AG04450 (cell line): ENCODE measurements at regions of chr11 and their contacts with region 1.

Region 1: GRCh38 chr11:45872513-45873356 is 12.7 kb upstream of the MAPK8IP1 start:
- DNase-seq: peak; percentile 61
- H3K4me3 ChIP-seq: no peak overlapping the region
- H3K27ac ChIP-seq: peak overlapping the region; percentile 78
- H3K27me3 ChIP-seq: no peaks in the 10 kb centered on the region
- CTCF ChIP-seq: peak; percentile 83

Region 2: DNA sequence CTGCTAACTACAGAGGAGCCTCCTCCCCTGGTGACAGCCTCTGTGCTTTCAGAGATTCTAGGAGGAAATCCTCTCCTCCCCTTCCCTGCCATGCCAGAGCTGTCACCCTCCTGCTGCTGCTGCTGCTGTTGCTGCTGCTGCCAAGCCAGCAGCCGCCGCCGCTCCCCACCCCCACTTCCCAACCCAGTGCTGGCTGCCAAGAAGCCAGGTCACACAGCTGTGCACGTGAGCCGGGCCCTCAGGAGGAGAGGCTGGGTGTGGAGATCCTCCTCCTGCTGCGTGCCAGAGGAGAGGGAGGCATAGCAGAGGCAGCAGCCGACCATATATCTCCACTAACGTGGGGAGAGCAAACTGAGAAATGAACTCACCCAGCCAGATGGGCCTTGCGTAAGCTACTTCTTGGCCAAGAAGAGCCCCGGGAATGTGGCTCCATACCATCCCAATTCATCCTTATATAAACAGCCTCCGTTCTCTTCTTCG is 13.0 kb before region 1 on chr11:
- CTCF ChIA-PET with region 1: interaction called, 75 read pairs
- POLR2A ChIA-PET with region 1: interaction called, 7 read pairs
- DNase-seq: peak; percentile 99
- H3K4me3 ChIP-seq: 0 out of 2 replicates have a peak overlapping the region, but pooled peaks have one; percentile 1
- H3K27ac ChIP-seq: peak overlapping the region; percentile 95
- H3K27me3 ChIP-seq: no peaks in the 10 kb centered on the region
- CTCF ChIP-seq: no peak

Region 3: DNA sequence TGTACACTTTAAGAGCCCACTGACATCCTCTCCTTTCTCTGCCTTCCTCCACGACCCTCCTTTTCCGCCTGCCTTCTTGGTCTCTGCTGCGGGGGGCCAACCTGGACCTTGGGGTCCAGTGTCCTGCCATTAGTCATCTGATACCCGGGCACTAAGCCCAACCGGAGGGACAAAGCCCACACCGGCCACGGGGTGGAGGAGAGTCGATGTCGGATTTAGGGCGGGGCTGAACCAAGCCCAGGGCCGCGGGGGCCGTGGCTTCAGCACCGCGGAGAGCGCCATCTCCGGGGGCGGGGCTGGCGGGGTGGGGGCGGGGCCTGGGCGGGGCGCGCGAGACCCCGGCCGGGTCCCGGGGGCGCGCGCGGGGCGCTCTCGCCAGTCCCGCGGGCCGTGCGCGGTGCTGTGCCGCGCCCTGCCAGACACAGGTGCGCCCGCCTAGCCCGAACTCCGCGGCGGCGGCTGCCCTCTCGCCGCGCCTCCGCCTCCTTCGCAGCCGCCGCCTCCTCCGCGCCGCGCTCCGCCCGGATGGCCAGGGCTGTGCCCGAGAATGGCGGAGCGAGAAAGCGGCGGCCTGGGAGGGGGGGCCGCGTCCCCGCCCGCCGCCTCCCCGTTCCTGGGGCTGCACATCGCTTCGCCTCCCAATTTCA is 12.7 kb after region 1 on chr11 and contains the start of gene MAPK8IP1:
- CTCF ChIA-PET with region 1: interaction called, 11 read pairs
- POLR2A ChIA-PET with region 1: interaction called, 3 read pairs
- DNase-seq: no peak
- H3K4me3 ChIP-seq: peak within 1 kb of the TSS; percentile 47
- H3K27ac ChIP-seq: no peak within 1 kb of the TSS
- H3K27me3 ChIP-seq: peaks cover 17% of the 10 kb centered on the region
- CTCF ChIP-seq: no peak
- polyA plus RNA-seq, gene MAPK8IP1: 5.6 and 7.6 TPM in 2 replicates

Region 4: GRCh38 chr11:45899448-45900173 is 26.9 kb after region 1 on chr11:
- CTCF ChIA-PET with region 1: interaction called, 12 read pairs
- POLR2A ChIA-PET with region 1: no interaction called
- DNase-seq: peak; percentile 63
- H3K4me3 ChIP-seq: peak overlapping the region; percentile 63
- H3K27ac ChIP-seq: peak overlapping the region; percentile 31
- H3K27me3 ChIP-seq: peaks cover 8% of the 10 kb centered on the region
- CTCF ChIP-seq: no peak

Region 5: GRCh38 chr11:46006418-46007070 is 133.8 kb after region 1 on chr11:
- CTCF ChIA-PET with region 1: interaction called, 13 read pairs
- POLR2A ChIA-PET with region 1: no interaction called
- DNase-seq: peak; percentile 66
- H3K4me3 ChIP-seq: no peak overlapping the region
- H3K27ac ChIP-seq: no peak overlapping the region
- H3K27me3 ChIP-seq: no peaks in the 10 kb centered on the region
- CTCF ChIP-seq: peak; percentile 81